ENCODE measurements at regions of chr6 and their contacts with region 1.

Region 1: GRCh38 chr6:36615018-36615761 is 21.0 kb downstream of the SRSF3 start:
- DNase-seq: peak in 5 of 9 experiments; percentile 31 to 80 (median 54)
- ATAC-seq: peak; percentile 84
- H3K4me3 ChIP-seq: no peak overlapping the region
- H3K4me3 Mint-ChIP-seq: no peak overlapping the region
- H3K27ac ChIP-seq: no peak overlapping the region
- H3K27ac Mint-ChIP-seq: peak overlapping the region; percentile 79
- H3K4me1 ChIP-seq: no peaks in the 10 kb centered on the region
- H3K4me1 Mint-ChIP-seq: peaks cover 15% of the 10 kb centered on the region
- H3K27me3 ChIP-seq: no peaks in the 10 kb centered on the region
- H3K27me3 Mint-ChIP-seq: no peaks in the 10 kb centered on the region
- CTCF ChIP-seq: peak; percentile 60

Region 2: DNA sequence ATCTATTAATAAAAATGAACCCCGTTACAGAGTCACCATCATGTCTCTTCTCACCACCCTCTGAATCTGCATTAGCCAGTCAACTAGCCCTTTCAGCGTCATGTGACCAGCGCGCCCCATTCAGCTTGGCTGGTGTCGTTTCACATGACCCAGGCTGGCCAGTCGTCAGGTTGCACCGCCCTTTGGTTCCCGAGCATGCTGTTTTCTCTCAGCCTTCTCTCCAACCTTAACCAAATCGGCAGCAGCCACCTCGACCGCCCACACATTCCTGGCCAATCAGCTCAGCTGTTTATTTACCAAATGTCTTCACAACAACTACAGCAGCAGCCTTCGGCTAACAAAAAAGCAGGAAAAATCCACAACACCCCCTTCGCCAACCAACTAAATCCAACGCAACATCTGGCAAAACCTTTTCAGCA is 15.4 kb before region 1 on chr6:
- CTCF ChIA-PET with region 1: interaction called, 22 read pairs
- POLR2A ChIA-PET with region 1: interaction called, 51 read pairs
- intact Hi-C with region 1: no loop called
- DNase-seq: peak; percentile 21 to 75 (median 58)
- ATAC-seq: peak; percentile 59
- H3K4me3 ChIP-seq: peak overlapping the region; percentile 25 to 40
- H3K4me3 Mint-ChIP-seq: peak overlapping the region; percentile 97
- H3K27ac ChIP-seq: peak overlapping the region in 1 of 2 experiments; percentile 78
- H3K27ac Mint-ChIP-seq: peak overlapping the region; percentile 67
- H3K4me1 ChIP-seq: peaks cover 79% of the 10 kb centered on the region
- H3K4me1 Mint-ChIP-seq: peaks cover 78% of the 10 kb centered on the region
- H3K27me3 ChIP-seq: no peaks in the 10 kb centered on the region
- H3K27me3 Mint-ChIP-seq: no peaks in the 10 kb centered on the region
- CTCF ChIP-seq: no peak

Region 3: GRCh38 chr6:36759148-36759759 is 144.1 kb after region 1 on chr6:
- CTCF ChIA-PET with region 1: interaction called, 25 read pairs
- POLR2A ChIA-PET with region 1: interaction called, 3 read pairs
- intact Hi-C with region 1: loop called (anchors 1 kb)
- DNase-seq: peak; percentile 48 to 83 (median 81)
- ATAC-seq: peak; percentile 50
- H3K4me3 ChIP-seq: no peak overlapping the region
- H3K4me3 Mint-ChIP-seq: no peak overlapping the region
- H3K27ac ChIP-seq: no peak overlapping the region
- H3K27ac Mint-ChIP-seq: no peak overlapping the region
- H3K4me1 ChIP-seq: peaks cover 15% of the 10 kb centered on the region
- H3K4me1 Mint-ChIP-seq: peaks cover 31% of the 10 kb centered on the region
- H3K27me3 ChIP-seq: no peaks in the 10 kb centered on the region
- H3K27me3 Mint-ChIP-seq: no peaks in the 10 kb centered on the region
- CTCF ChIP-seq: peak; percentile 96

Region 4: DNA sequence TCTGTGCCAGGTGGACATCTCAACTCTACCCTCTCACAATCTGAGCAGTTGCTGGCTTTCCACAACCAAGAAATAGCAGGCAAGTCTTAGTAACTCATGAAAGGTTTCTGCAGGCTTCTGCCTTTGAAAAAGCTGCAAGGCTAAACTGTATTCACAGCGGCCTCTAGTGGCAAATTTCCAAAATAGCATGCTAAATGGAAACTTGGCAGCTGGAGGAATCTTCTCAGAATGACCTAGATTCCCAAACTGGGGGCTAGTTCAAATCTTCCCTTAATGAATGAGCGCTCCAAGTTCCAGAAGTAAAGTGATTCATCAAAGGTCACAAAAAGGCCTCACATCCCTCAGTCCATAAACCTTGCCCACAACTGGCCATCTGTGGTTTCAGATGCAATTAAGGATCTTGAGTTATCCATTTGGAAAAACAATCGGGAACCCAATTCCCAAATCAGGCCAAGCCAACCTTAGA is 236.0 kb after region 1 on chr6:
- CTCF ChIA-PET with region 1: no interaction called
- POLR2A ChIA-PET with region 1: no interaction called
- intact Hi-C with region 1: loop called in 1 of 2 experiments (anchors 5 kb)
- DNase-seq: peak in 4 of 9 experiments; percentile 26 to 61 (median 40)
- ATAC-seq: no peak
- H3K4me3 ChIP-seq: no peak overlapping the region
- H3K4me3 Mint-ChIP-seq: no peak overlapping the region
- H3K27ac ChIP-seq: no peak overlapping the region
- H3K27ac Mint-ChIP-seq: no peak overlapping the region
- H3K4me1 ChIP-seq: no peaks in the 10 kb centered on the region
- H3K4me1 Mint-ChIP-seq: peaks cover 2% of the 10 kb centered on the region
- H3K27me3 ChIP-seq: no peaks in the 10 kb centered on the region
- H3K27me3 Mint-ChIP-seq: no peaks in the 10 kb centered on the region
- CTCF ChIP-seq: peak; percentile 67